ENCODE measurements at regions of chr1 and their contacts with region 1.

Region 1: GRCh38 chr1:227542143-227543120 is 20.9 kb upstream of the ZNF678 start:
- DNase-seq: peak; percentile 87
- H3K4me3 Mint-ChIP-seq: peak overlapping the region; percentile 56
- H3K27ac Mint-ChIP-seq: peak overlapping the region; percentile 55
- H3K4me1 Mint-ChIP-seq: no peaks in the 10 kb centered on the region
- H3K27me3 Mint-ChIP-seq: no peaks in the 10 kb centered on the region

Region 2: DNA sequence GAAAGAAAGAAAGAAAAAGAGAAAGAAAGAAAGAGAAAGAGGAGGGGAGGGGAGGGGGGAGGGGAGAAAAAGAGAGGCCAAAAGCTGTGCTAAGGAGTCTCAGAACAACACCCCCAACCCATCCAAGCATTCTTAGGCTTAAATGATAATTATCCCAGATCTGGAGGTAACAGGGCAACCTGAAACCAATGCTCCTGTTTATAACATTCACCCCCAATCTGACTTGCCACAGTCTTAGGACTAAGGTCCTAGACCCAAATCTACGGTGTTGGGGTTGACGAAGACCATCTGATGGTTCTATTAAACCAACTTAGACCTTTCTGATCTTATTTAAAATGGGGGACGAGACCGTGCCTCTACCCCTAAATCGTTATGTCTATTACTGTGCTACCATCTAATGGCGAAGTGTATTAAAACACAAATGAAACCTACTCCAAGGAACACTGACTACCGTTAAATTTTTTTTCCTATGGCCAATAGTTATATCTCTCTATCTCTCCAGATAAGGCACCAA is 104.9 kb before region 1 on chr1:
- intact Hi-C with region 1: no loop called
- DNase-seq: no peak
- H3K4me3 Mint-ChIP-seq: no peak overlapping the region
- H3K27ac Mint-ChIP-seq: no peak overlapping the region
- H3K4me1 Mint-ChIP-seq: no peaks in the 10 kb centered on the region
- H3K27me3 Mint-ChIP-seq: peaks cover 9% of the 10 kb centered on the region

Region 3: GRCh38 chr1:227563324-227564201 is 21.1 kb after region 1 on chr1 and contains the start of gene ZNF678:
- intact Hi-C with region 1: loop called (anchors 1 kb)
- DNase-seq: peak; percentile 76
- H3K4me3 Mint-ChIP-seq: peak within 1 kb of the TSS; percentile 87
- H3K27ac Mint-ChIP-seq: peak within 1 kb of the TSS; percentile 88
- H3K4me1 Mint-ChIP-seq: peaks cover 22% of the 10 kb centered on the region
- H3K27me3 Mint-ChIP-seq: peaks cover 30% of the 10 kb centered on the region
- total RNA-seq, gene ZNF678: 4.2 and 5.0 TPM in 2 replicates